ENCODE measurements at regions of chr9 and their contacts with region 1.

Region 1: GRCh38 chr9:79477955-79478771 is 93.6 kb upstream of the TLE4 start:
- DNase-seq: no peak
- ATAC-seq: no peak
- H3K4me3 ChIP-seq: no peak overlapping the region
- H3K27ac ChIP-seq: no peak overlapping the region
- H3K4me1 ChIP-seq: no peaks in the 10 kb centered on the region
- H3K27me3 ChIP-seq: no peaks in the 10 kb centered on the region
- CTCF ChIP-seq: peak in 7 of 12 donors; percentile 8 to 39 (median 31)
- POLR2A ChIP-seq: no peak

Region 2: DNA sequence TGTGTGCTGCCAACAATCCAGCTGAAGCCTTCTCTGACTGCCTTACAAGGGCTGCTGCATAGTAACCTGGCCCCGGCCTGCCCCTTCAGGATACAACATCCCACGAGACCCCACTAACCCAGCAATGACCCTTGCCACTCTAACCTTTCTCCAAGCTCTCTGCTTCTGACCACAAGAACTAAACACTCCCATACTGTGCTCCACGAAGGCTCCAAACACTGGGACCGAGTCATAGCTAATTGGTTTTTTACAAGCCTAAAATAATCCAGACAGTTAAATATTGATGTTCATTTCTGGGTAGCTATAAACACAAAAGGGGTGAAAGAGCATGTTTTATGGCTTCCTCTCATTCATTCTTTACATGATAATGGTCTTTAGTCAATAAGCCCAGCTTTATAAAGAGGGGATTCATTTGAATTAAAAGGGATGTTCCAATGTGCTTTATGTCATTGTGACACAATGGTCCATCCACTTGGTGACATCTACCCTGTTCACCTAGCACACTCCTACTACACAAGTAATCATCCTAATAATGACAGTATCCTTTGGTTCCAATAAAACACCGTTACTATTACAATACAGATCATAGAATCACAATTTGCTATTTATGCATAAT is 77.4 kb after region 1 on chr9:
- intact Hi-C with region 1: no loop called
- DNase-seq: no peak
- ATAC-seq: no peak
- H3K4me3 ChIP-seq: no peak overlapping the region
- H3K27ac ChIP-seq: no peak overlapping the region
- H3K4me1 ChIP-seq: no peaks in the 10 kb centered on the region
- H3K27me3 ChIP-seq: no peaks in the 10 kb centered on the region
- CTCF ChIP-seq: no peak
- POLR2A ChIP-seq: no peak

Region 3: GRCh38 chr9:79955300-79955699 is 477.1 kb after region 1 on chr9:
- intact Hi-C with region 1: loop called in 2 of 10 experiments (anchors 10 kb)
- DNase-seq: no peak
- ATAC-seq: no peak
- H3K4me3 ChIP-seq: no peak overlapping the region
- H3K27ac ChIP-seq: no peak overlapping the region
- H3K4me1 ChIP-seq: no peaks in the 10 kb centered on the region
- H3K27me3 ChIP-seq: no peaks in the 10 kb centered on the region
- CTCF ChIP-seq: peak in 10 of 12 donors; percentile 9 to 42 (median 29)
- POLR2A ChIP-seq: no peak